ENCODE measurements at regions of chr2 and their contacts with region 1.

Region 1: DNA sequence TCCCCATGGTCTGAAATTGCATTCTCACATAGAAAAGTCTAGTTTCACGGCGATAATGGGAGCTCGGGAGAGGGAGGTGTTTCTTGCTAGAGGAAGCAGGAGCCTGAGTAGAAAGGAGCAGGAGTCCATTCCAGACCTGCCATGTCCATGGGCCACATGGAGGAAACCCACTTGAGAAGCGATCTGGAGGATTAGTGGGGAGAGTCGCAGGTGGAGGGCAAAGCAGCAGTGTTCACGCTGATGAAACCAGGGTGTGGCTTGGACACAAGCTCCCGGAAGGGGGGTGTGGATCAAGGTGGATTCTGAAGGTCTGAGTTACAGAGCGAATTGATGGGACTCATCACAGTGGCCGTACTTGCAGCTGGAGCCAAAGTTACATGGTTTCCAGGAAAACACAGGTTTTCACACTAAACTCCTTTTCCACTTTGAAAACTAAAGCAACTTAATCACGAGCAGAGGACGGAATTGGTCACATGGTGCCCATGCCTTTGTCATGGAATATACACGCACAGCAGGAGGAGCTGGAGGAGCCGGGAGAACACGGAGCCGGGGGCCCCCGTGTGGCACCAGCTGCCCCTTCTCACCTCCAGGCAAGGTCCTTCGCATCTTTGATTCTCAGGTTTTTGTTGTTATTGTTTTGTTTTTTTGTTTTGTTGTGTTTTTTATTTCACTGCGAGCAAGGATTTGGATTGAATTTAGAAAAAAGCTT is 255.1 kb upstream of the MYT1L start:
- DNase-seq: no peak
- H3K4me3 ChIP-seq: no peak overlapping the region
- H3K27ac ChIP-seq: no peak overlapping the region
- H3K4me1 ChIP-seq: no peaks in the 10 kb centered on the region
- H3K27me3 ChIP-seq: no peaks in the 10 kb centered on the region
- CTCF ChIP-seq: no peak
- EP300 ChIP-seq: no peak
- POLR2A ChIP-seq: no peak

Region 2: DNA sequence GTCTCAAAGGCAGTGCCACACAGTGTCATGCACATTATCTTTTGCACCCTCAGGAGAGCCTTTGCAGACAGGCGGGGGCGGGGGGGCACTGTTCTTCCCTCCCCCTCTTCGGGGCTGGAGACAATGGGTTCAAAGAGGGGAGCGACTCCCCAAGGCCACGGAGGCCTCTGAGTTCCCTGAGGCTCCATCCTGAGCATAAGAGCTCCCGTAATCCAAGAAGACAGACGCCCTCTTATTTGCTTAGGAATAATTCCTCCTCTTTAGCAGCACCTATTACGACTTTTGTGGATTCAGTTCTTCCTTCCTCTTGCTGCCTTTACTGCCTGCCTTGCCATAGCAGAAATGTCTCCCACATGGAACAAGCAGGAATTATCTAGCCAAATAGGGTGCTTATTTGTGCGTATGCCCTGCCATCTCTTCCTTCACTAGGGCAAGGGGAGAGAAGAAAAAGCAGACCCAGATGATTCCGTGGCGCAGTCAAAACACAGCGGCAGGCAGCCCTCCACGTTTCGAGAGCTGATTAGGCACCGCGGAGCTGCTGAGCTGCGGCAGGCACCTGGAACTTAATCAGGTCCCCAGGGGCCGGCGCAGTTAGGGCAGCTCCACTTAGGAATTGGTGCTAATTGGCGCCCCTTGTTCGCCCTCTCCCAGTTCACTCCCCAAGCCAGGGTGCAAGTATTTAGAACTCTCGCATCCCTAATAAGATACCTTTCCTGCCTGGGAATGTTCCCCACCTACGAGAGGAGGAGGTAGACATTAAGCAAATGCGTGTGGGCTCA is 21.7 kb before region 1 on chr2:
- intact Hi-C with region 1: loop called in 1 of 4 experiments (anchors 2 kb)
- DNase-seq: no peak
- H3K4me3 ChIP-seq: no peak overlapping the region
- H3K27ac ChIP-seq: no peak overlapping the region
- H3K4me1 ChIP-seq: no peaks in the 10 kb centered on the region
- H3K27me3 ChIP-seq: no peaks in the 10 kb centered on the region
- CTCF ChIP-seq: no peak
- EP300 ChIP-seq: no peak
- POLR2A ChIP-seq: no peak

Measured in ovary (tissue), 10 donors.